ENCODE measurements at regions of chr1 and their contacts with region 1.

Region 1: GRCh38 chr1:100719490-100719889 is at the start of gene VCAM1:
- DNase-seq: peak in 3 of 5 donors; percentile 17 to 25 (median 17)
- ATAC-seq: peak in 2 of 4 donors; percentile 46 to 67
- H3K4me3 ChIP-seq: peak within 1 kb of the TSS in 11 of 12 donors; percentile 3 to 57 (median 41)
- H3K27ac ChIP-seq: peak within 1 kb of the TSS in 8 of 12 donors; percentile 3 to 42 (median 32)
- H3K4me1 ChIP-seq: peaks cover 0 to 25% (median 2%) of the 10 kb centered on the region in 12 donors
- H3K27me3 ChIP-seq: no peaks in the 10 kb centered on the region
- CTCF ChIP-seq: no peak
- POLR2A ChIP-seq: no peak
- total RNA-seq, gene VCAM1: 1.3 to 40.7 (median 3.9) TPM

Region 2: DNA sequence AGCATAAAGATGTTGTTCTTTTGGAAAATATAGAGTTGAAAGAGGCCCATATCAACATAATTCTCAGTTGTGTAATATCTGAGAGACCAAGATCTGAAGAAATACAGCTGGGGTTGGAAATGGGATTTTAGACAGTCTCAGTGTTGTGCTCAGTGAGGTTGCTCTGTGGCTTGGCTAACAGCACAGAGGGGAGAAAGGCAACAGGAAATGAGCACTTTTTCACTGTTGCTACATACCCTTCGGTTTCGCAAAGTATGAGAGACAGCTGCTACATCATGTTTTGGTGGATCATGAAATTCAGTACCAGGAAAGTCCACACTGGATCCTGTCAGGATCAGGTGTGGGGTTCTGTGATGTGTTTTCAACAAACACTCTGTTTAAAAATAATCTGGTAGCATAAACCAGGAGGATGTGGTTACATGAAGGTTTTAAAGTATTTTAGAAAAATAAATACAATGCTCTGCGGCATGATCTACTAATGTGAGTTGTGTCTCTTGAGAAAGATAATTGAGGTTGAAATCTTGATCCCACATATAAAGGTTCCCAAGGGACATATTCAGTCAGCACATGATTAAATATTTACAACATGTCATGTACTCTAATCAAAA is 188.5 kb before region 1 on chr1:
- intact Hi-C with region 1: loop called in 1 of 10 experiments (anchors 10 kb)
- DNase-seq: peak in 3 of 5 donors; percentile 35 to 56 (median 36)
- ATAC-seq: peak; percentile 89 to 98 (median 96)
- H3K4me3 ChIP-seq: no peak overlapping the region
- H3K27ac ChIP-seq: peak overlapping the region in 10 of 12 donors; percentile 12 to 80 (median 60)
- H3K4me1 ChIP-seq: peaks cover 0 to 60% (median 6%) of the 10 kb centered on the region in 12 donors
- H3K27me3 ChIP-seq: peaks cover 0 to 7% (median 0%) of the 10 kb centered on the region in 9 donors
- CTCF ChIP-seq: no peak
- POLR2A ChIP-seq: no peak

Region 3: GRCh38 chr1:100606438-100606837 is 113.1 kb before region 1 on chr1:
- intact Hi-C with region 1: no loop called
- DNase-seq: peak in 3 of 5 donors; percentile 28 to 39 (median 30)
- ATAC-seq: peak in 3 of 4 donors; percentile 64 to 83 (median 81)
- H3K4me3 ChIP-seq: no peak overlapping the region
- H3K27ac ChIP-seq: no peak overlapping the region
- H3K4me1 ChIP-seq: no peaks in the 10 kb centered on the region
- H3K27me3 ChIP-seq: no peaks in the 10 kb centered on the region
- CTCF ChIP-seq: peak; percentile 49 to 82 (median 67)
- POLR2A ChIP-seq: no peak

Region 4: GRCh38 chr1:100671601-100672000 is 47.9 kb before region 1 on chr1:
- intact Hi-C with region 1: loop called in 1 of 10 experiments (anchors 2 kb)
- DNase-seq: no peak
- ATAC-seq: no peak
- H3K4me3 ChIP-seq: no peak overlapping the region
- H3K27ac ChIP-seq: no peak overlapping the region
- H3K4me1 ChIP-seq: peaks cover 0 to 4% (median 0%) of the 10 kb centered on the region in 12 donors
- H3K27me3 ChIP-seq: no peaks in the 10 kb centered on the region
- CTCF ChIP-seq: no peak
- POLR2A ChIP-seq: no peak